ENCODE measurements at regions of chr6 and their contacts with region 1.

Region 1: GRCh38 chr6:2848851-2849250 is 7.2 kb upstream of the SERPINB1 start:
- DNase-seq: peak; percentile 86
- ATAC-seq: peak; percentile 69
- H3K4me3 Mint-ChIP-seq: peak overlapping the region; percentile 58
- H3K27ac Mint-ChIP-seq: peak overlapping the region; percentile 88
- H3K4me1 Mint-ChIP-seq: peaks cover 59% of the 10 kb centered on the region
- H3K27me3 Mint-ChIP-seq: no peaks in the 10 kb centered on the region

Region 2: GRCh38 chr6:2862712-2863181 is 13.9 kb after region 1 on chr6:
- CTCF ChIA-PET with region 1: interaction called, 37 read pairs
- POLR2A ChIA-PET with region 1: interaction called, 5 read pairs
- intact Hi-C with region 1: loop called in 1 of 2 experiments (anchors 1 kb)
- DNase-seq: peak; percentile 77
- ATAC-seq: peak; percentile 54
- H3K4me3 Mint-ChIP-seq: peak overlapping the region; percentile 66
- H3K27ac Mint-ChIP-seq: peak overlapping the region; percentile 99
- H3K4me1 Mint-ChIP-seq: peaks cover 80% of the 10 kb centered on the region
- H3K27me3 Mint-ChIP-seq: no peaks in the 10 kb centered on the region

Region 3: GRCh38 chr6:2876210-2877056 is 27.6 kb after region 1 on chr6:
- CTCF ChIA-PET with region 1: interaction called, 11 read pairs
- POLR2A ChIA-PET with region 1: no interaction called
- intact Hi-C with region 1: no loop called
- DNase-seq: no peak
- ATAC-seq: peak; percentile 51
- H3K4me3 Mint-ChIP-seq: peak overlapping the region; percentile 74
- H3K27ac Mint-ChIP-seq: peak overlapping the region; percentile 87
- H3K4me1 Mint-ChIP-seq: peaks cover 81% of the 10 kb centered on the region
- H3K27me3 Mint-ChIP-seq: no peaks in the 10 kb centered on the region

Region 4: DNA sequence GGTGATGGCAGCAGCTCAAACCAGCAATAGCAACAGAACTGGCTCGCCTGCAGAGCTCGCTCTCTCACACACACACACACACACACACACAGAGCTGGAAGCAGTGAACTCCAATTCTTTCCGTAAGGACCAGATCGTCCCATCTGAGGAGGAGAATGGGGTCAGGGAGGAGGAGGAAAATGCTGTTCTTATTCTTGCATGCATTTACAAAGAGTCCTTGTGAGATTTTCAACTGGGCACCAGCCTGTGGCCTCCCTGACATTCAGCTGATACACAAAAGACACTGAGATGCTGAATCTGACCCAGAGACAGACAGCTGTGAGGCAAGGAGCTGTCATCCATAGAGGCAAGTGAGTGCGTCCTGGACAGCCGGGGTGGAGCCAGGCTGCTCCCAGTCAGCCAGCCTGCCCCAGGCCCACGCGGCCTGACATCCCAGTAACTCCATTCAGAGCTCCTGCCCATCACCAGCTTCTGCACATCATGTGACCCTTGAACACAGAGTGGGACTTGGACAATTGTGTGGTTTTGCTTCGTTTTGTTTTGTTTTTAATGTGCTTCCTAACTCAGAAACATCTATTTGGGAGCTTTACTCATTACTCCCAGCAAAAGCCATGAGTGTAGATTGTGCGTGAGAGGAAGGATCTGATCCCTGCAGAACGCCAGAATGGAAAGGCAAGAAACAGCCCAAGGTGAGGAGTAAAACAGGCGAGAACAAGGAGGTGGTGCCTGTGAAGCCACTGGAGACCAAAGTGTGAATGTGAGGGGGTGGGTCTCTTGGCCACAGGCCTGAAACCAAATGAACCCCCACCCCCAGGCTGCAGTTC is 52.2 kb after region 1 on chr6:
- CTCF ChIA-PET with region 1: interaction called, 34 read pairs
- POLR2A ChIA-PET with region 1: interaction called, 10 read pairs
- intact Hi-C with region 1: no loop called
- DNase-seq: peak; percentile 26
- ATAC-seq: no peak
- H3K4me3 Mint-ChIP-seq: peak overlapping the region; percentile 91
- H3K27ac Mint-ChIP-seq: peak overlapping the region; percentile 93
- H3K4me1 Mint-ChIP-seq: peaks cover 45% of the 10 kb centered on the region
- H3K27me3 Mint-ChIP-seq: no peaks in the 10 kb centered on the region

Region 5: DNA sequence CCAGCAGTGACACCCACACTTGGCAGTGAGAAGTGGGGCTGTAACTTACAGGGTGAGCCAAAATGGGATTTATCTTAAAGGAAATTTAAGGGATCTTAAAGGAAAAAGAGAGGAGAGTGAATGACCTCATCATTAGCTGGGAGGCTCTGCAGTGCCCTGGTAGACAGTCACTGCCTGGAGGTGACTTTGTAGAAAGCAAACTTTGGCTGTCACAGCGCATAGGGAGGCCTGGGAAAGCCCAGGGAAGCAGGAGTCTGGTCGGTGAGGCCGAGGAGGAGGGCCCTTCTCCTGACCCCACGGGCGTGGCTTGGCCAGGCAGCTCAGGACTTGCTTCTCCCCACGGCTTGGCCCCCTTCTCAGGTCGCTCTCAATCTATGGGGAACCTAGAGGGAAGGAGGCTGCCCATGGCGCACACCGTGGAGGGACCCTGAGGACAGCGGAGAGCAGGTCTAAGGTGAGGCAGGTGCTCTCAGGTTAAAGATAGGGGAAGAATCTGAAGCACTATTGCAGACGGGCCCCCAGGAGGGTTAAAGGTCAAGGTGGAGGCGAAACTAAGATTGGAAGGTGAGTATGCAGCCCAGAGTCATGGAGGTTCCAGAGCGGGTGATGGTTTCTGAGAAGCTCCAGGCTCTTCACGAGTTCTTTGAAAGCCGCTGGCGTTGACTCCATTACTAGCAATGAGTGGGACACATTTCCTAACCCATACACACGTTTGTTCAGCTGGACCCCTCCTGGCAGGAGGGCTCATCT is 203.8 kb after region 1 on chr6:
- CTCF ChIA-PET with region 1: no interaction called
- POLR2A ChIA-PET with region 1: interaction called, 3 read pairs
- intact Hi-C with region 1: loop called (anchors 2 to 5 kb)
- DNase-seq: no peak
- ATAC-seq: no peak
- H3K4me3 Mint-ChIP-seq: peak overlapping the region; percentile 69
- H3K27ac Mint-ChIP-seq: no peak overlapping the region
- H3K4me1 Mint-ChIP-seq: peaks cover 15% of the 10 kb centered on the region
- H3K27me3 Mint-ChIP-seq: no peaks in the 10 kb centered on the region

Measured in activated CD4-positive, alpha-beta T cell treated with anti-CD3 and anti-CD28 coated beads for 36 hours (primary cell).